Ascending aorta (tissue), 2 donors: ENCODE measurements at regions of chr3 and their contacts with region 1.

Region 1: DNA sequence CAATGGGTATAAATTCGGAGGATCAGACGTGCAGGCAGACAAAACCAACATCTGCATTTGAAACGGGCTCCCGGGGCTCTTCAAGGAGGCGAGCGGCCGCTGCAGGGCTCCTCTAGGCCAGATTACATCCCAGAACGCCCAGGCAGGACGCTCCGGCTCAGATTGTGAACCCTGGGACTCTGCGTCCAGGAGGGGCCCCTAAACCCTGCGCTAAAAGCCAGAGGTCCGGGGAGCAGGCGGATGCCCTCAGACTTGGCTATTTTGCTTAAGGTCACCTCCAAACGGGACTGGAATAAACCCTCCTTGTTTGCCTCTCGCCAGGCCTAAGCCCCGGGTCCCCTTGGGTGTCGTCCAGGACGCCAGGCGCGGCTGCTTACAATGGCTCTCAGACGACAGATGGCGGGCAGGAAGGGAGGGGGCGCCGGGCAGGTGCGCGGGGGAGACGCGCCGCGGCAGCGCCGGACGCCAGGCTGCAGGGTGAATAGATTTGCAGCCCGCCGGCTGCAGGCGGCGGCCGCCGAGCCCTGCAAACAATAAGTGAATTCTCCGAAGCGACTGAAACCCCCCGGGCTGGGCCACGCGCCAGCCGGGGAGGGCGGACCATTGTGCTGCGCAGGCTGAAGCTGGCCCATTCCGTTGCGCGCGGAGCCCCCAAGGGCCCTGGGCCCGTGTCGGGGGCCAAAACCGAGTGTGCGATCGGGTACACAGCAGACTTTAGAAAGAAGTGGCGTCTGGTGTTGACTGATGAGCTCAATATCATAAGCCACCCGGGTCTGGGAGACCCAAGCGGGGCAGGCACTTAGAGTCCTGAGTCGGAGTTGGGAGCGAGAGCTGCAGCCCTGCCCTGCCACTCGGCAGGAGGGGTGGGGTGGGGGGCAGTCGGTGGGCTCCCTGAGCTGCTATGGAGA is 32.3 kb upstream of the AMOTL2 start:
- DNase-seq: no peak
- H3K4me3 ChIP-seq: peak overlapping the region; percentile 54 to 64
- H3K27ac ChIP-seq: no peak overlapping the region
- H3K4me1 ChIP-seq: no peaks in the 10 kb centered on the region
- H3K27me3 ChIP-seq: no peaks in the 10 kb centered on the region
- CTCF ChIP-seq: no peak

Region 2: GRCh38 chr3:134087046-134087985 is 319.3 kb before region 1 on chr3:
- intact Hi-C with region 1: no loop called
- DNase-seq: no peak
- H3K4me3 ChIP-seq: no peak overlapping the region
- H3K27ac ChIP-seq: no peak overlapping the region
- H3K4me1 ChIP-seq: no peaks in the 10 kb centered on the region
- H3K27me3 ChIP-seq: no peaks in the 10 kb centered on the region
- CTCF ChIP-seq: no peak

Region 3: GRCh38 chr3:134427400-134428145 is 21.0 kb after region 1 on chr3:
- intact Hi-C with region 1: loop called (anchors 2 kb)
- DNase-seq: peak in 1 of 2 donors; percentile 77
- H3K4me3 ChIP-seq: no peak overlapping the region
- H3K27ac ChIP-seq: no peak overlapping the region
- H3K4me1 ChIP-seq: no peaks in the 10 kb centered on the region
- H3K27me3 ChIP-seq: no peaks in the 10 kb centered on the region
- CTCF ChIP-seq: no peak